ENCODE measurements at regions of chr17 and their contacts with region 1.

Region 1: GRCh38 chr17:19377602-19378392 is 501 bp upstream of the MAPK7 start:
- DNase-seq: peak; percentile 93
- ATAC-seq: peak; percentile 95
- H3K4me3 Mint-ChIP-seq: peak overlapping the region; percentile 100
- H3K27ac Mint-ChIP-seq: peak overlapping the region; percentile 99
- H3K4me1 Mint-ChIP-seq: peaks cover 31% of the 10 kb centered on the region
- H3K27me3 Mint-ChIP-seq: no peaks in the 10 kb centered on the region
- CTCF ChIP-seq: no peak

Region 2: DNA sequence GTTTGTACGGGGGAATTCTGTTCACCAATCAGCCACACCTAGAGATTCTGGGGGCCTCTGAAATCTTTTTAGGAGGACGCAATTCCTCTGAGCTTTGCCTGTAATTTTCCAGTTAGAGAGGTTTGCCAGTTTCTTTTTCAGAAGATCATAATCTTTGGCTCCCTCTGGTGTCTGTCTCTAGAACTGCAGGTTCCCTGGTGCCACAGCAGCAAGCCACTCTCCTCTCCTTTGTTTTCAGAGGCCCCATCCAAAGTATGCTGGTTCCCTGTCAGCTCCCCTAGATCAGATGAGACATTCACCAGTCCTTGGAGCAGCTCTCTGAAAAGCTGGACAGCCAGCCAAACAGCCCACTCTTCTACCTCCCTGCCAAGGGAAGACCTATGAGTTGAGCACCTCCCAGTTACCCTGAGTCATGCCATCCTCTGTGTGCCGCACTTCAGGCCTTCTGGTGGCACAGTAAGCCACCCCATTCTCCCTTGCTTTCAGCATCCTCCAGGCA is 69.3 kb after region 1 on chr17:
- CTCF ChIA-PET with region 1: interaction called, 8 read pairs
- POLR2A ChIA-PET with region 1: no interaction called
- intact Hi-C with region 1: loop called (anchors 5 kb)
- DNase-seq: no peak
- ATAC-seq: peak; percentile 65
- H3K4me3 Mint-ChIP-seq: no peak overlapping the region
- H3K27ac Mint-ChIP-seq: no peak overlapping the region
- H3K4me1 Mint-ChIP-seq: peaks cover 5% of the 10 kb centered on the region
- H3K27me3 Mint-ChIP-seq: peaks cover 17% of the 10 kb centered on the region
- CTCF ChIP-seq: peak; percentile 63

Region 3: GRCh38 chr17:19507775-19508576 is 130.2 kb after region 1 on chr17:
- CTCF ChIA-PET with region 1: no interaction called
- POLR2A ChIA-PET with region 1: interaction called, 3 read pairs
- intact Hi-C with region 1: loop called (anchors 1 kb)
- DNase-seq: peak; percentile 83
- ATAC-seq: peak; percentile 80
- H3K4me3 Mint-ChIP-seq: peak overlapping the region; percentile 92
- H3K27ac Mint-ChIP-seq: peak overlapping the region; percentile 94
- H3K4me1 Mint-ChIP-seq: peaks cover 11% of the 10 kb centered on the region
- H3K27me3 Mint-ChIP-seq: peaks cover 2% of the 10 kb centered on the region
- CTCF ChIP-seq: no peak

Region 4: GRCh38 chr17:19533718-19534561 is 156.1 kb after region 1 on chr17 and contains the start of gene SLC47A1:
- CTCF ChIA-PET with region 1: no interaction called
- POLR2A ChIA-PET with region 1: no interaction called
- intact Hi-C with region 1: no loop called
- DNase-seq: no peak
- ATAC-seq: no peak
- H3K4me3 Mint-ChIP-seq: peak within 1 kb of the TSS; percentile 24
- H3K27ac Mint-ChIP-seq: no peak within 1 kb of the TSS
- H3K4me1 Mint-ChIP-seq: peaks cover 12% of the 10 kb centered on the region
- H3K27me3 Mint-ChIP-seq: peaks cover 49% of the 10 kb centered on the region
- CTCF ChIP-seq: no peak
- total RNA-seq, gene SLC47A1: 0.11 and 0.44 TPM in 2 replicates

Region 5: DNA sequence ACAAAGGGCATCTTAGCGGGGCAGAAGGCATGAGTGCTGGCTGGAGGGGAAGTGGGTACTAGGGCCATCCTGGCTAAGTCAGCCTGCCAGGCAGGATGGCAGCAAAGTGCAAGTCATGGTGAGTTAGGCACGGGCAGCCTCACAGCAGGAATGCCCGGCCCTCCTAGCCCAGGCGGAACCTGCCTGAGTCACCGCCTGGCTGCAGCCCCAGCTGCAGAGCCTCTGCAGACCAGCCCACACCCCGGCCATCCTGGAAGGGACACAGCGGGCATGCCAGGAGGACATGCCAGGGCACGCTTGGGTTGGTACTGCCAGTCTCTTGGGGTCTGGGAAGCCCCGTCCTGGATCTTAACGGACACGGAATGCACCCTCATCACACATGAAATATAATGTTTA is 375.2 kb after region 1 on chr17:
- CTCF ChIA-PET with region 1: interaction called, 3 read pairs
- POLR2A ChIA-PET with region 1: interaction called, 3 read pairs
- intact Hi-C with region 1: loop called (anchors 5 kb)
- DNase-seq: no peak
- ATAC-seq: no peak
- H3K4me3 Mint-ChIP-seq: no peak overlapping the region
- H3K27ac Mint-ChIP-seq: no peak overlapping the region
- H3K4me1 Mint-ChIP-seq: peaks cover 45% of the 10 kb centered on the region
- H3K27me3 Mint-ChIP-seq: peaks cover 15% of the 10 kb centered on the region
- CTCF ChIP-seq: no peak

Measured in activated B cell treated with CpG ODN at 0.5 μM for 24 hours (primary cell).